Activated CD4-positive, alpha-beta memory T cell treated with anti-CD3 and anti-CD28 coated beads for 36 hours (primary cell): ENCODE measurements at regions of chr4 and their contacts with region 1.

Region 1: GRCh38 chr4:122922877-122923511 is 597 bp upstream of the NUDT6 start:
- DNase-seq: peak; percentile 94
- H3K4me3 Mint-ChIP-seq: peak overlapping the region; percentile 94
- H3K27ac Mint-ChIP-seq: peak overlapping the region; percentile 90
- H3K4me1 Mint-ChIP-seq: peaks cover 11% of the 10 kb centered on the region
- H3K27me3 Mint-ChIP-seq: no peaks in the 10 kb centered on the region

Region 2: DNA sequence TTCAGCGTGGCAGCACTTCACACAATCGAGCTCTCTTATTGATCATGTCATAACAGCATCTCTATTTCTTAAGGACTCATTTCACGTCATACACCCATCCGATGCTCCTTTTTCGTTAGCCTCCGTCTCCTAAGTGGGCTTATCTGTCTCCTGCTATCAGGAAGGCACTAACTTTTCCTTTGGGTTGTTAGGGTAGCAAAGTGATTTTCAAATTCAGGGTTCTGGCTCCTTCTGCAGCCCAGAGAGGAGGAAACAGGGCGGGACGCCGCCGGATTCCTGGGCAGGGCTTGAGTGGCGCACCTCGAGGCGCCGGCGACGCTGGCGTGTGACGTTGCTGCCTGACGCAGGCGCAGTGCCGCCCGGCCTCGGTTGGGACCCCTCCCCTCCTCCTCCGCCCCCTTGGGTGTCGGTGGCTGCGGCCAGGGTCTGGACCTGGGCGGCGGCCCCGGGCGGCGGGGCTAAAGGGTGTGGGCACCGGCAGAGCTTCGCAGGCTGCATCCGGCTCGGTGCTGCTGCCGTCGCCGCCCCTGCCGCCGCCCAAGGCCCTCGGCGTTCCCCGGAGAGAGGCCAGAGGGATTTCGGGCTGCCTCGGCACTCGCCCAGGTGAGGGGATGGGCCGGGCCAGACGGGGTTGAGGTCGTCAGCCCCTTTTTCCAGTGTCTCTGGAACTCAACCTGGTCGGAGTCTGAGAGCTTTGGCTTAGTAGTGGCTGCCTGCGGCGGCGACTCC is 770.8 kb before region 1 on chr4 and contains the start of gene BLTP1:
- CTCF ChIA-PET with region 1: no interaction called
- POLR2A ChIA-PET with region 1: no interaction called
- intact Hi-C with region 1: loop called (anchors 5 kb)
- DNase-seq: peak; percentile 91
- H3K4me3 Mint-ChIP-seq: peak within 1 kb of the TSS; percentile 92
- H3K27ac Mint-ChIP-seq: peak within 1 kb of the TSS; percentile 93
- H3K4me1 Mint-ChIP-seq: peaks cover 51% of the 10 kb centered on the region
- H3K27me3 Mint-ChIP-seq: no peaks in the 10 kb centered on the region
- total RNA-seq, gene BLTP1: 26.6 to 30.7 TPM

Region 3: GRCh38 chr4:122602277-122603142 is 320.5 kb before region 1 on chr4:
- CTCF ChIA-PET with region 1: interaction called, 5 read pairs
- POLR2A ChIA-PET with region 1: interaction called, 3 read pairs
- intact Hi-C with region 1: loop called (anchors 2 kb)
- DNase-seq: no peak
- H3K4me3 Mint-ChIP-seq: peak overlapping the region; percentile 11
- H3K27ac Mint-ChIP-seq: peak overlapping the region; percentile 38
- H3K4me1 Mint-ChIP-seq: peaks cover 25% of the 10 kb centered on the region
- H3K27me3 Mint-ChIP-seq: peaks cover 7% of the 10 kb centered on the region

Region 4: DNA sequence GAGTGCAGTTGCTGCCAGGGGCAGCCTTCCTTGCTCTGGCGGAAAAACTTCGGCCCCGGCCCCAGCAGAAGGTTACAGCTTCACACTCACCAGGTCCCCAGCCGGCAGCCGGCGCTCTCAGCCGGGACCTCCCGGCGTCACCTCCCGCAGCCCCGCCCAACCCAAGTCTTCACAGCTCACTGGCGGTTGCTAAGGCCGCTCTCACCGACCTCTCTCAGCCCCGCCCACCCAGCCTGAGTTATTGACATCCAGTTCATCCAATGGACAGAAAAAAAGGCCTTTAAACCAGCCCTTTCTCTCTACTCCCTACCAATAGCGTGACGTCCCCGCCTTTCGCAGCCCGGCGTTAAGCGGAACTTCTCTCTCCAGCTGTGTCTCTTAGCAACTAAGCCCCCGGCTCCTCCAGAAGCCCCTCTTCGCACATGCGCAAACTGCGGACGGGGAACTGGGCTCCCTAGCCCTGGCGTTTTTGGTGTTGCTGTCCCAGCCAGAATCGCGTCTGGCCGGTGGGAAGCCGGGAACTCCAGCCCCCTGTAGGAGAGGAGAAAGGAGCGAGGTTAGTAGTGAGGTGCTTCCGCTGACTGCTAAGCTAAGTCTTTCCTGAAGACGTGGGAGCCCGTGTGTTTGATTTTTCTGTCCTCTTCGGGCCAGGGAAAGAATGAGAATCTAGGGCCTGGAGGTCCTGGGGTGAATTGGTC is 190.5 kb before region 1 on chr4 and contains the start of gene BBS12:
- CTCF ChIA-PET with region 1: interaction called, 20 read pairs
- POLR2A ChIA-PET with region 1: interaction called, 5 read pairs
- intact Hi-C with region 1: loop called (anchors 1 kb)
- DNase-seq: peak; percentile 100
- H3K4me3 Mint-ChIP-seq: peak within 1 kb of the TSS; percentile 87
- H3K27ac Mint-ChIP-seq: peak within 1 kb of the TSS; percentile 87
- H3K4me1 Mint-ChIP-seq: peaks cover 27% of the 10 kb centered on the region
- H3K27me3 Mint-ChIP-seq: no peaks in the 10 kb centered on the region
- total RNA-seq, gene BBS12: 3.7 to 4.3 TPM

Region 5: GRCh38 chr4:122827879-122828601 is 95.0 kb before region 1 on chr4:
- CTCF ChIA-PET with region 1: no interaction called
- POLR2A ChIA-PET with region 1: no interaction called
- intact Hi-C with region 1: loop called (anchors 2 kb)
- DNase-seq: peak; percentile 68
- H3K4me3 Mint-ChIP-seq: peak overlapping the region; percentile 74
- H3K27ac Mint-ChIP-seq: peak overlapping the region; percentile 3
- H3K4me1 Mint-ChIP-seq: peaks cover 13% of the 10 kb centered on the region
- H3K27me3 Mint-ChIP-seq: peaks cover 63% of the 10 kb centered on the region

Region 6: DNA sequence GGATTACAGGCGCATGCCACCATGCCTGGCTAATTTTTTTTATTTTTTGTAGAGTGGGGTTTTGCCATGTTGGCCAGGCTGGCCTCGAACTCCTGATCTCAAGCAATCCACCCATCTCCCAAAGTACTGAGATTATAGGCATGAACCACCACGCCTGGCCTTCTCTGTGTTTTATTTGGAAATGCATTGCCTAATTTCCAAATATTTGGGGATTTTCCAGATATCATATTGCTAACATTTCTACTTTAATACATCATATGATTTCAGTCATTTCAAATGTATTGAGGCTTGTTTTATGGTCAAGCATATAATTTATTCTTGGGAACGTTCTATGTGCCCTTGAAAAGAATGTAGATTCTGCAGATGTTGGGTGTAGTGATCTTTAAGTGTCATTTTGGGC is 57.6 kb before region 1 on chr4:
- CTCF ChIA-PET with region 1: no interaction called
- POLR2A ChIA-PET with region 1: no interaction called
- intact Hi-C with region 1: no loop called
- DNase-seq: no peak
- H3K4me3 Mint-ChIP-seq: no peak overlapping the region
- H3K27ac Mint-ChIP-seq: no peak overlapping the region
- H3K4me1 Mint-ChIP-seq: no peaks in the 10 kb centered on the region
- H3K27me3 Mint-ChIP-seq: peaks cover 4% of the 10 kb centered on the region

Region 7: DNA sequence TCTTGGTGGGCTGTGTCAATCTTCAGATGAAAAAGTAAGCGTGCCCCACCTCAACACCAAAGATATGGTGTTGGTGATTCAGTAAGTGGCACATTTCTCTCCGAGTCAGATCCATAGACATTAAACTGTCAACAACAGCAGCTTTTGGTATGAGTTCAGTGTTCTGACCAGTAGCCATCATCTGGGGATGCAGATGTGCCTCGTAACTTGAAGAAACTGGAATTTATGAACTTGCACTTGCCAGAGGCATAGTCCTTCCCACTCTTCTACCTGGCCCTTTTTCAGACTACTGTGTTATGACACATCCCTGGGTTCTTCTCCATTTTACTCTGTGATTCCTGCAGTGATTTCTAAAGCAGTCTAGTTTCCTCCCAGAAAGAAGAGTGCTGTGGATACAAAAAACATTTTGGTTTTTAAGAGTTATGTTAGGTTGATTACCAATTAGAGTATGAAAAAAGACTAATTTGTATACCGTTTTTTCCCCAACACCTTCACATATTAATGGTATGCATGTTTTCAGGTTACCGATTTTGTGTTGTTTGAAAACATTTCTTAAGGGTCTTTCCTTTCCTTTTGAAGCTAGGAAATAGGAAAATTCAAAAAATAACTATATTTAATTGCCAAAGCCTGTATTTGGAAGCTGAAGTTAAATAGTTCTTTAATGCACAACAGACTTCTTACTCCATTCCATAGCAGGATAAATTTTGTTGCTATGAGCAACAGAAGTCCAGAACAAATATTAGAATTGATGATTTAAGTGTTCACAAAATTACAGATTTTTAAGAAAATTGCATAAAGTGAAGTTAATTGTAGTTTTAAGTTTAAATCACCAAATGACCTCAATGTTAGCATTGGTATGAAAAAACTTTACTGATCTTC is 39.9 kb before region 1 on chr4:
- CTCF ChIA-PET with region 1: no interaction called
- POLR2A ChIA-PET with region 1: no interaction called
- intact Hi-C with region 1: no loop called
- DNase-seq: no peak
- H3K4me3 Mint-ChIP-seq: no peak overlapping the region
- H3K27ac Mint-ChIP-seq: no peak overlapping the region
- H3K4me1 Mint-ChIP-seq: no peaks in the 10 kb centered on the region
- H3K27me3 Mint-ChIP-seq: peaks cover 2% of the 10 kb centered on the region